Psoas muscle (tissue), 8 donors: ENCODE measurements at regions of chr18 and their contacts with region 1.

Region 1: DNA sequence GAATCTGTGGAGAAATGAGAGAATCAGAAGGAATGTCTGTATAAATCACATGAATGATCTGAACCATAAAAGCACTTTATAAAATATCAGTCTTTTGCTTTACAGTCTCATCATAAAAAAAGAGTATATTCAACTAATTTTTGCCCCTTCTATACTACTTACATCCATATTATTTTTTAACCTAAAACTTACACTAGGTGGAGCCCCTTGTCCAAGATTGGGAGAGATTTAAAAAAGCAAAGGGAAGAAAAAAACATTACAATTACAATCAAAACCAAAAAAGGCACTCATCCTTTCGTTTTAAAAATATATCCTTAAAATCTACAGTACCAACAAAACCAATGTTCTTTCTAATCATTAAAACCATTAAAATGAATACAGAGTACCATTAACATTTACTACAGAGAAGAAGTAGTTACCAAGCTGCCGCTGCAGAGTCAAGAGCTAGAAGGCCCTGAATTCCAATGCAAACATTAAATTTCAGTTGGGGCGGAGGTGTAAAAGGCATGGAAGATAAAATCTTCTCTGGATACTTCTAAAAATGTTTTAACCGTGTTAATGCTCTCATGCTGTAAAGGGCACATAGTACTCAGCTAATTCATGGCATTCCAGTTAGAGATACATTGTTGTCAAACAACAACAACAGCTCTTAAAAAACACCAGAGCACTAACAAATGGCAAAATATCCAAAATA is 56.7 kb upstream of the EPB41L3 start:
- DNase-seq: no peak
- ATAC-seq: no peak
- H3K4me3 ChIP-seq: no peak overlapping the region
- H3K27ac ChIP-seq: no peak overlapping the region
- H3K4me1 ChIP-seq: no peaks in the 10 kb centered on the region
- H3K27me3 ChIP-seq: no peaks in the 10 kb centered on the region
- CTCF ChIP-seq: peak; percentile 43

Region 2: DNA sequence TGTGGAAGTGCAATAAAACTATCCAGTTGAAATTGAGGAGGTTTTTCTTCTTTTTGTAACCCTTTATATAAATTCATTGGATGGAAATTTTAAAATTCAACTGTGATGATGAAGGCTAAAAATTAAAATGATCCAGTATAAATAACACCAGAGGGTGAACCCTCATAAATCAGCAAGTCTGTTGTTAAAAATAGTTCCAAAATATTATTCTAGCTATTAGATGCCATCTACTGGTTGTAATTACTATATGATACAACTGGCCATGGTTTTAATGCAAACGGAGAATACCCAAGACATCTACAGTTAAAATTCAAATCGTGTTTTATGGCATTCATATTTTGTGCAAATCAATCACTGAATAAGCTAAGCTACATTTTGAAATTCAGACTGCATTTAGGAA is 241.0 kb after region 1 on chr18:
- intact Hi-C with region 1: loop called in 1 of 2 experiments (anchors 10 kb)
- DNase-seq: no peak
- ATAC-seq: no peak
- H3K4me3 ChIP-seq: no peak overlapping the region
- H3K27ac ChIP-seq: no peak overlapping the region
- H3K4me1 ChIP-seq: no peaks in the 10 kb centered on the region
- H3K27me3 ChIP-seq: no peaks in the 10 kb centered on the region
- CTCF ChIP-seq: no peak